ENCODE measurements at regions of chr20 and their contacts with region 1.

Region 1: GRCh38 chr20:23606652-23607049 is 934 bp upstream of the CST9 start:
- DNase-seq: peak; percentile 32 to 77 (median 65)
- ATAC-seq: peak; percentile 92
- H3K4me3 ChIP-seq: no peak overlapping the region
- H3K4me3 Mint-ChIP-seq: no peak overlapping the region
- H3K27ac ChIP-seq: no peak overlapping the region
- H3K27ac Mint-ChIP-seq: no peak overlapping the region
- H3K4me1 ChIP-seq: no peaks in the 10 kb centered on the region
- H3K4me1 Mint-ChIP-seq: peaks cover 5% of the 10 kb centered on the region
- H3K27me3 ChIP-seq: no peaks in the 10 kb centered on the region
- H3K27me3 Mint-ChIP-seq: no peaks in the 10 kb centered on the region
- CTCF ChIP-seq: peak; percentile 70

Region 2: DNA sequence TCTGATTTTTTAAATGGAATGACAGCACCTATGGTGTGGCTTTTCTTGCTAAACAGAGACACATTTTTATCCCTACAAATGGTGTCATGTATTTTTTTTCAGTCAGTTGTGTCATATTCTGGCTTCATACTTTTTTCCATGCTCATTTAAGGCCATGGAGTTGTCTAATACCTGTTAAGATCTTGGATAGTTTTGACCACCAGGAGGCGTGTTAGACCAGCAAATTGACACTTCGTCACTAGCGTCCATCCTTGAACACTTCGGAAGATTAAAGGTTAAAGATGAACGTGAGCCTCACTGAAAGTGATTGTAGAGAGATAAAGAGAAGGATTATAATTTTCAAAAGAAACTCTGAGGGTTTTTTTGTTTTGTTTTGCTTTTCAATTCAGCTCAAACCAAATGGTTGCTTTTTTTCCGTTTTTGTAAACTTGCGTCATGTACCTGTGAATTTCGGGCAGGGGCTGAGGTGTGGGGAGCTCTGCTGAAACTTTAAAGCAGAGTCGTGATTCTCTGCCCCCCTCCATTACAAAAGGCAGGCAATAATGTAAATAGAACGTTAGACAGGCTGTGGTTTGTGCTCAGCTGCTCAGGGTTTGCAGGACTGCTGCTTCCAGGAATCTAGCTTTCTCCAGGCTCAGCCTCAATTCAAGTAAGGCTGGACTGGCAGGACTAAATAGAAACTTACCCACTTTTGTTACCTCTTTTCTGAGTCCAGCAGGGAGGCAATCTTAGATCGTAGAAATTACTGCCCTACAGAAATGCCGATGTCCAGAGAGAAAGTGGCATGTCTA is 1267.4 kb before region 1 on chr20:
- CTCF ChIA-PET with region 1: no interaction called
- POLR2A ChIA-PET with region 1: no interaction called
- intact Hi-C with region 1: loop called in 1 of 2 experiments (anchors 5 kb)
- DNase-seq: peak in 3 of 9 experiments; percentile 9 to 47 (median 11)
- ATAC-seq: no peak
- H3K4me3 ChIP-seq: no peak overlapping the region
- H3K4me3 Mint-ChIP-seq: no peak overlapping the region
- H3K27ac ChIP-seq: no peak overlapping the region
- H3K27ac Mint-ChIP-seq: no peak overlapping the region
- H3K4me1 ChIP-seq: no peaks in the 10 kb centered on the region
- H3K4me1 Mint-ChIP-seq: peaks cover 1% of the 10 kb centered on the region
- H3K27me3 ChIP-seq: no peaks in the 10 kb centered on the region
- H3K27me3 Mint-ChIP-seq: peaks cover 4% of the 10 kb centered on the region
- CTCF ChIP-seq: peak; percentile 44

Region 3: DNA sequence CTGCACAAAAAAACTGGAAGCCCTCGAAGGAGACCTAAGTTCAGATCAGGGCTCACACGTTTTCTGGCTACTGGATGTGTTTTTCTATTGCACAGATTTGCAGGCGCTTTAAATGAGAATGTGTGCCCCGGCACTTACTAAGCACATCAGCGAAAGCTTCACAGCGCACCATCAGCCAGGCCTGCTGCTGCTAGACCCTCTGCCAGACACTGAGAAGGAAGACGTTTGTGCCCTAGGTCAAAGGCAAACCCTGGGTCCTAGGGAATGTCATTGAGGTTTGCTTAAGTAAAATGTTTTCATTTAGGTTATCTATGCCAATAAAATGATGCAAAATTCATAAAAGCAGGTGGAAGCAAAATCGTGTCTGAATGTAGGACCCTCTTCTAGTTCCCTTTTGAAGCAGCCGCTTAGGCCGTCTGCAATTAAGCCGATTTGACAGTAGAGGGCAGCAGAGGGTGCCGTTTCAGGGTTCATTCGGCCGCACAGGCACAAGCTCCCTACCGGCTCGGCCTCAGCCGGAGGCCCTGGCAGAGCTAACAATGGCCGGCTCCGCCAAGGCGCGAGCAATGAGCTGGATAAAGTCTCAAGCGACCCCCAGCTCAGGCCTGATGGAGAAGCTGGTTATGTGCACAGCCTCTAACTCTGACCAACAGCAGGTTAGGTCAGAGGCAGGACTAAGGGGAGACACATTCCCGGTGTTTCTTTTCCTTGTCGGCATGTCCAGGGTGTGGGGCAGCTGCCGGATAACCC is 915.1 kb before region 1 on chr20:
- CTCF ChIA-PET with region 1: interaction called, 4 read pairs
- POLR2A ChIA-PET with region 1: no interaction called
- intact Hi-C with region 1: loop called (anchors 2 to 5 kb)
- DNase-seq: peak in 8 of 9 experiments; percentile 7 to 53 (median 42)
- ATAC-seq: no peak
- H3K4me3 ChIP-seq: no peak overlapping the region
- H3K4me3 Mint-ChIP-seq: no peak overlapping the region
- H3K27ac ChIP-seq: no peak overlapping the region
- H3K27ac Mint-ChIP-seq: no peak overlapping the region
- H3K4me1 ChIP-seq: peaks cover 3% of the 10 kb centered on the region
- H3K4me1 Mint-ChIP-seq: peaks cover 1% of the 10 kb centered on the region
- H3K27me3 ChIP-seq: no peaks in the 10 kb centered on the region
- H3K27me3 Mint-ChIP-seq: peaks cover 3% of the 10 kb centered on the region
- CTCF ChIP-seq: peak; percentile 71

Region 4: DNA sequence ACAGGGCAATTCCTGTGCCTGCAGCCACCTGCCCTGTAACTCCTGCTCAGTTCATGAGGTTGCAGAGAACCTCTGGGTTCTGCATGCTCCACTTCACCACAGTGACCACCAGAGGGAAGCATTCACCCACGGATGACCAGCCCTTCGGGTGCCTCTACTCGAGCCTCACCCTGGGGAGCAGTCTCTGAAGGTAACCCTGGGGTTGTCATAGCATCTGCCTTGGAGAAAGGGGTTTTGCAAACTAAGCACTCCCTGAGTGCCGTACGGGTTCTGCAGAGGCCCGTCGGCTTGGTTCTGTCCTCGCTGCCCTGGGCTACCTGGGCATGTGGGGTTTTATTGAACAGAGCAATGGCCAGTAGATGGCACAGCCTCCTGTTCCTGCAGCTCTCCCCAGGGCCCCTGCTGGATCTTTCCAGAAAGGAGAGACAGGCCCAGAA is 283.1 kb after region 1 on chr20:
- CTCF ChIA-PET with region 1: no interaction called
- POLR2A ChIA-PET with region 1: no interaction called
- intact Hi-C with region 1: no loop called
- DNase-seq: peak; percentile 37 to 82 (median 63)
- ATAC-seq: peak; percentile 88
- H3K4me3 ChIP-seq: no peak overlapping the region
- H3K4me3 Mint-ChIP-seq: no peak overlapping the region
- H3K27ac ChIP-seq: no peak overlapping the region
- H3K27ac Mint-ChIP-seq: no peak overlapping the region
- H3K4me1 ChIP-seq: peaks cover 9% of the 10 kb centered on the region
- H3K4me1 Mint-ChIP-seq: no peaks in the 10 kb centered on the region
- H3K27me3 ChIP-seq: no peaks in the 10 kb centered on the region
- H3K27me3 Mint-ChIP-seq: peaks cover 4% of the 10 kb centered on the region
- CTCF ChIP-seq: peak; percentile 61